ENCODE measurements at regions of chr10 and their contacts with region 1.

Region 1: DNA sequence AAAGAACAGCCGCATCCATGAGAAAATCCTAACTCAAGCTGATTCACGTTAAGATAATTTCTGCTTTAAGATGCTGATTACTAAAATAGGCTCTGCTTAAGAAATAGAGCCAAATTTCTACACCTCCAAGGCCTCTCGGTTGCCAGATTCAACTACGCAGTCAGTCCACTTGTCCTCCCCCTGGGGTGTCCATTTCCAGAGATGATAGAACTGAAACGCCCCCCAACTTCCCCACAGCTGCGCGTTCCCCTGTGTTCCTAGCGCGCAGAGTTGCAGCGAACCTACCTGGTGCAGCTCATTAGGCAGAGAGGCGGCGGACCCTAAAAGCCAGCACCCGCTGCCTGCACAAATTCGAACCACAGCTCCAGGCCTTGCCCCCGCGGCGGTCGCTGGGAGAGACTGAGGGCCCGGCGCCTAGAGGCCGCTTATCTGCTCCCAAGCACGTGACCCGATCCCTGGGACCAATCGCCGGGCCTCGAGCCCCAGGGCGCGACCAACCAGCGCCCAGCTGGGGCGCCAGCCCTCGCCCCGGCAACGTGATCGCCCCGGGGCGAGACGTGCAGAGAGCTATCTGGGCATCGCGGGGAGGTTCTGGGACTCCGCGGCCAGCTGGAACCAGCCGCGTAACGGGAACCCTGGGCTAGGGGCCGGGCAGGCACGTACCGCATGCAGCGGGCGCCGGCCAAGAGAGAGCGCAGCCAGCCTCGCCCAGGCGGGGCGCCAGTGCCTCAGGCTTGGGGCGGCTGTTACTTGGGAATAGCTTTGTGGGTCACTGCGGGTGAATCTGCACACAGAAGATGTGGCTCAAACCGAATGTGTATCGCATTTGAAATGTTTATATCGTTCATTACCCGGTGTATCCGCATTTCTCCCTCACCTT is at the start of gene PPP1R3C:
- DNase-seq: peak; percentile 84
- H3K4me3 ChIP-seq: peak within 1 kb of the TSS; percentile 53 to 71 (median 55)
- H3K27ac ChIP-seq: peak within 1 kb of the TSS; percentile 15
- H3K4me1 ChIP-seq: peaks cover 19% of the 10 kb centered on the region
- H3K27me3 ChIP-seq: no peaks in the 10 kb centered on the region
- CTCF ChIP-seq: peak in 1 of 2 donors; percentile 36
- total RNA-seq, gene PPP1R3C: 0.49 to 11.3 TPM

Region 2: DNA sequence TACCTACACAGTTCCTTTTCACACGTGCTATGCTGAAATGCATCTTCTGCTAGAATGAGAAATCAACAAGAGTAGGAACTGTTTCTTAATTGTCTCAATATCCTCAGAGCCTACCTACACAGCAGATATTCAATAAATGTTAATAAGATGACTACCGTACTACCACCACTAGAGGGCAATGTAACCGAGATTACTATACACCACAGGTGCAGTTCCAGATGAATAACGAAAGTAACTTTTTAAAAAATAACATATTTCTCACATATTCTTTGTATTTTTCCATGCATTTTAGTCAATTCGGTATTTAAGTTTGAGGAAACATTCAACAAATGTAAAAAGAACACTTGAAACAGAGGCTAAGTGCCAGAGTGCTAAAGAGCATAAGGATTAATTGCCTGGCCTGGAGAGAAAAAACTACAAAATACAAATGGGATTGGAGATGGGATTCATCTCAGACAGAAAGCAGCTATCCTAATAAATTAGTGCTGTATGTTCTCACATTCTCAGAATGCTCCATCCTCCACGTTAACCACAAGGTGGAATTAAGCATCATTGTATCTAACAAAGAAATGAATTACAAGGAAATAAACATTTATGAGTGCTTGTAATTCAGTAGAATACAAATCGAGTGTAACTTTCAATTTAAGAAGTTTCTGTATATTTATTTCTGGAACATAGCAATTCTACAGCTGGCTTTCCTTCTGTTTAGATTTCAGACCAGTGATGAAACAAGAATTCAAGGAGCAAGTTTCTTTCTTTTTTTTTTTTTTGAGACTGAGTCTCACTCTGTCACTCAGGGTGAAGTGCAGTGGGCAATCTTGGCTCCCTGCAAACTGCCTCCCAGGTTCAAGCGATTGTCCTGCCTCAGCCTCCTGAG is 243.0 kb before region 1 on chr10:
- CTCF ChIA-PET with region 1: no interaction called
- dilution Hi-C with region 1: no loop called
- in situ Hi-C with region 1: no loop called
- intact Hi-C with region 1: loop called (anchors 1 kb)
- DNase-seq: peak; percentile 36
- H3K4me3 ChIP-seq: no peak overlapping the region
- H3K27ac ChIP-seq: no peak overlapping the region
- H3K4me1 ChIP-seq: no peaks in the 10 kb centered on the region
- H3K27me3 ChIP-seq: peaks cover 2% of the 10 kb centered on the region
- CTCF ChIP-seq: peak; percentile 54 to 55

Region 3: DNA sequence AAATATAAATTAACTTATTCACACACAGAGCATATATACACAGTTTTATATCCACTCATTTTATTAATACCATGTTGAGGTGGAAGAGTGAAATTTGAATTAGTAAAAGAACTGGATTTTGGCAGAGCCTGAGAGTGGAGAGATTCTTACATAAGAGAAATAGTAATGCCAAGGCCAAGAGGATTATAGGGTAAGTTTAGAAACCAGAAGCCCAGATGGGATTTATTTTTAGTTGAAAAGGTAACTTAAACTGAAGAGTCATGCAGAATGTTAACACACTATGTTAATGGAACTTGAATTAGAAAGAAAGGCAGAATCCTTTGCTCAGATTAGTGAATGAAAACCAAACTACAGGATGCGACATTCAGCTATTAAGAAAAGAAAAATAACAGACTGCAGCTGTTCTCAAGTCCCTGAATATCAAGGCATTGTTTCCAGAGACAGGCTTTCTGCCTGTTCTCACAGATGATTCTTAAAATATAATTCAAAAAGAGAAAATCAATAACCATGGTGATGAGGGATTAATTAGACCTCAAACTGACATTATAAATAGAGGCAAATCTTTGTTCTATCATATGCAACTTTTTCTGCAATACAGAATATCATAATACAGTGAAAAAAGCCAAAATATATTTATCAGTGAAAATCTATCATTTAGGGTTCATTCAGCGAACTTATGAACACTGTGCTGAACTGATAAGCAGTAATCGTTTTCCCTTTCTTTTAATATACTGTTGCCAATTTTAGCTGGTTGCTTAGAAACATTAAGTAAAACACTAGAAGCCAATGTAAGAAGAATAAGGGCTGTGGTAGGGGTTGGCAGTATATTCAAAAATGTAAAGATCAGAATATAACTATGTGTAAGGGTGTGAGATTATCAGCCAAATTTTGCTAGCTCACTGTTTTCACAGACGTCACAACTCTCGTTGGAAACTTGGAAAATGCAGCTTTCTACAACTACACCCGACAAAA is 188.4 kb before region 1 on chr10:
- CTCF ChIA-PET with region 1: no interaction called
- dilution Hi-C with region 1: no loop called
- in situ Hi-C with region 1: no loop called
- intact Hi-C with region 1: no loop called
- DNase-seq: no peak
- H3K4me3 ChIP-seq: no peak overlapping the region
- H3K27ac ChIP-seq: no peak overlapping the region
- H3K4me1 ChIP-seq: no peaks in the 10 kb centered on the region
- H3K27me3 ChIP-seq: no peaks in the 10 kb centered on the region
- CTCF ChIP-seq: no peak

Region 4: GRCh38 chr10:91493313-91493712 is 139.6 kb before region 1 on chr10:
- CTCF ChIA-PET with region 1: interaction called, 13 read pairs
- dilution Hi-C with region 1: no loop called
- in situ Hi-C with region 1: loop called in 1 of 2 experiments (anchors 10 kb)
- intact Hi-C with region 1: loop called (anchors 1 kb)
- DNase-seq: peak; percentile 21
- H3K4me3 ChIP-seq: no peak overlapping the region
- H3K27ac ChIP-seq: no peak overlapping the region
- H3K4me1 ChIP-seq: no peaks in the 10 kb centered on the region
- H3K27me3 ChIP-seq: no peaks in the 10 kb centered on the region
- CTCF ChIP-seq: peak; percentile 31 to 45

Region 5: DNA sequence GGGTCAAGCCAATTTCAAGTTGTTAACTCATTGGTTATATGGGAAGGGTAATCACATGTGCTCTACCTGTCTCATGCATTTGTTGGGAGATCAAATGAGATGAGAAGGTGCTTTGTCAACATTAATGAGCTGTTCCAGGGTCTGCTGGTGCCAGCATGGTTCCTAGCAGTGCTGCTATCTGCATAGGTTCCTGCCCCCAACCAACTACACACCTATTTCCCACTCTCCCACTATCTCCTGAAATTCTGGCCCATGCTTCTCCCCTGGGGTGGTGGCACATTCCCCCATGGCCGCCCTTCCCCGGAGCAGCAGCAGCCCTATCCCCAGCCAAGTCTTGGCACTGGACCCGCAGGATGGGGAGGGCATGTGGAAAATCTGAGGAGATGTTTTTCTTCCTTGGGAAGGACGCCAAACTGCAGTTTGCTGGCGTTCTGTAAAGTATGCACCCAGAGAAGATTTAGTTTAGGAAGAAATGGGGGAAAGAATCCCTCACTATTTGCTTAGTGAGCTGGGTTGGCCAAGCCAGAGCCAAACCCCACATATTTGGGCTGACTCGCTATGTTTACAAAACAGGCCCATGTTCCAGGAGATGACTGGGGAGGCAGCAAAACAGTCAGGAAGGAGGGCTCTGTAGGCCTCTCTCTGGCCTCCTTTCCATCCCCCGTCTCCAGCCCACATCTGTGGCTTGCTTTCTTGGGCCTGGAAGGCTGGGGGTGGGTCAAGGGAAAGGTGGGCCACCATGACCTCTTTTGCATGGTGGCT is 42.6 kb before region 1 on chr10:
- CTCF ChIA-PET with region 1: no interaction called
- dilution Hi-C with region 1: no loop called
- in situ Hi-C with region 1: no loop called
- intact Hi-C with region 1: no loop called
- DNase-seq: peak; percentile 39
- H3K4me3 ChIP-seq: no peak overlapping the region
- H3K27ac ChIP-seq: no peak overlapping the region
- H3K4me1 ChIP-seq: peaks cover 20% of the 10 kb centered on the region
- H3K27me3 ChIP-seq: no peaks in the 10 kb centered on the region
- CTCF ChIP-seq: no peak